ENCODE measurements at regions of chrX and their contacts with region 1.

Region 1: DNA sequence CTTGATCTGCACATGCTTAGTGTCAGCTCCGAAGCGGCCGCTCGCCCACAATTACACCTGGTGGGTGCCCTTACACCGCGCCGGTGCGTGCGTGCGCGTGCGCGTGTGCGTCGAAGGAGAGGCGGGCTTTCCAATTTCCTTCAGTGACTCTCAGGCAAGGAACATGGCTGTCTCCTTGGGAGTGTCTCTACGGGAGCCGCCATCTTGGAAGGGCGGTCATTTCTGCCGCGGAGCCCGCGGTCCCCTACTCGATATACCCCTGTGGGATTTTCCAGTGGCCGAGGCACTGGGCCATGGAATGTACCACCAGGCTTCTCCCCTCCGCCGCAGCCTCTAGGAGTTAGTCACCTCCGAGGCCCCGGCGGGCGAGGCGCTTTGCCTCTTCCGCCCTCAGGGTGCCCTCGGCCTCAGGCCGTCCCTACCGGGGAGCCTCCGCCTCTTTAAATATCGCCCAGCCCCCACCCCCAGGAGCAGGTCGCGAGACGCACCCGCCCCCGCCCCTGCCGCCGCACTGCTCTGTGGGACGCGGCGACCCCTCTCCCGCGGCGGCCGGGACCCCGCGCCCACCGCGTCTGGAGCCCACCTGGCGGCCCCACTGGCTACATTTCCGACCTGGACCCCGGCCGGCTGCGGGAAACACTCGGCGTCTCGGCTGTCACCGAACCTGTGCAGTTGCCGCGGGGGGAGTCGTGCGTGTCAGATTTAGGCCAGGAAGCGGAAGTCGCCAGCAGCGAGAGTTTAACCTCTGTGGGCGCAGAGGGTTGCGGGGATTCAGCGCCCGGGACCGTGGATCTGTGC is at the start of gene ZNF41:
- DNase-seq: peak; percentile 63
- ATAC-seq: peak; percentile 78
- H3K4me3 Mint-ChIP-seq: peak within 1 kb of the TSS; percentile 90
- H3K27ac Mint-ChIP-seq: peak within 1 kb of the TSS; percentile 92
- H3K4me1 Mint-ChIP-seq: peaks cover 42% of the 10 kb centered on the region
- H3K27me3 Mint-ChIP-seq: no peaks in the 10 kb centered on the region
- CTCF ChIP-seq: no peak
- total RNA-seq, gene ZNF41: 15.4 and 19.2 TPM in 2 replicates

Region 2: DNA sequence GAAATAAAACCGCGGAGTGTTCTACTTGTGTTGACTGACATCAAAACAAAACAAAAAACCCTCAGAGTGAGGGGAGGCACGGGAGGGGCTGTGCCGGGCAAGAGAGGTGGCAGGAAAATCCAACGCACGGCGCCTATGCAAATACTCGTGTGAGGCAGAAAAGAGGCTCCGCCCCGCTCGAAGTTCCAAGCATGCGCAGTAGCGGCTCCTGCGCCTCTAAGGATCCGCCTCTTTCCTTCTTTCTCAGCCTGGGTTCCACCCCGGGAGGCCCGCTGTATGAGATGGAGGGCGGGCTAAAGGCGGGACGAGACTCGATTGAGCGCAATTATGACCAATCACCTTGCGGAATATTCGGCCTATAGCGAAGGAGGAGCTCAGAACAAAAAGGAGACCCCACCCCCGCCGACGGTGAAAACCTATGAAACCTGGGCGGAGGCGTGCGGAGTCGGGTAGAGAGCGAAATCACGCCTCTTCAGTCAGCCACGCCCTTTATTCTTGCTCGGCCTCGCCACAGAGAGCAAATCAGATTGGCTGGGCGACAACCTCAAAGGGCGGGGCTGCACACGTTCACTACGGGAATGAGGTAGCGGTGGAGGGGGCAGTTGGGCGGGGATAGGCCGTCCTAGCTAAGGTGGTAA is 264.9 kb before region 1 on chrX:
- CTCF ChIA-PET with region 1: no interaction called
- POLR2A ChIA-PET with region 1: interaction called, 4 read pairs
- intact Hi-C with region 1: loop called (anchors 2 kb)
- DNase-seq: peak; percentile 84
- ATAC-seq: peak; percentile 80
- H3K4me3 Mint-ChIP-seq: peak overlapping the region; percentile 92
- H3K27ac Mint-ChIP-seq: peak overlapping the region; percentile 99
- H3K4me1 Mint-ChIP-seq: peaks cover 40% of the 10 kb centered on the region
- H3K27me3 Mint-ChIP-seq: no peaks in the 10 kb centered on the region
- CTCF ChIP-seq: no peak

Region 3: GRCh38 chrX:47233337-47234113 is 249.2 kb before region 1 on chrX:
- CTCF ChIA-PET with region 1: no interaction called
- POLR2A ChIA-PET with region 1: interaction called, 5 read pairs
- intact Hi-C with region 1: loop called (anchors 2 kb)
- DNase-seq: peak; percentile 74
- ATAC-seq: peak; percentile 90
- H3K4me3 Mint-ChIP-seq: peak overlapping the region; percentile 92
- H3K27ac Mint-ChIP-seq: peak overlapping the region; percentile 98
- H3K4me1 Mint-ChIP-seq: peaks cover 15% of the 10 kb centered on the region
- H3K27me3 Mint-ChIP-seq: no peaks in the 10 kb centered on the region
- CTCF ChIP-seq: no peak

Region 4: GRCh38 chrX:47413179-47413594 is 69.5 kb before region 1 on chrX:
- CTCF ChIA-PET with region 1: no interaction called
- POLR2A ChIA-PET with region 1: no interaction called
- intact Hi-C with region 1: no loop called
- DNase-seq: no peak
- ATAC-seq: no peak
- H3K4me3 Mint-ChIP-seq: no peak overlapping the region
- H3K27ac Mint-ChIP-seq: no peak overlapping the region
- H3K4me1 Mint-ChIP-seq: no peaks in the 10 kb centered on the region
- H3K27me3 Mint-ChIP-seq: no peaks in the 10 kb centered on the region
- CTCF ChIP-seq: no peak

Region 5: DNA sequence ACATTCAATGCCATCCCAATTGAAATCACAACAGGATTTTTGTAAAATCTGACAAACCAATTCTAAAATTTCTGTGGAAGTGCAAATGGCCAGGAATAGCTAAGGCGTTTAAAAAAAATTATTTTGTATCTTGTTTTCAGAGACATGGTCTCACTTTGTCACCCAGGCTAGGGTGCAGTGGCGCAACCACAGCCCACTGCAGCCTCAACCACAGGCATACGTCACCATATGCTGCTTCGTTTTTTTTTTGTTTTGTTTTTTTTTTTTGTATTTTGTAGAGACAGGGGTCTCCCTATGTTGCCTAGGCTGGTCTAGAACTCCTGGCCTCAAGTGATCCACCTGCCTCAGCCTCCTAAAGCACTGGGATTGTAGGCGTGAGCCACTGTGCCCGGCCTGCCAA is 24.2 kb before region 1 on chrX:
- CTCF ChIA-PET with region 1: no interaction called
- POLR2A ChIA-PET with region 1: no interaction called
- intact Hi-C with region 1: no loop called
- DNase-seq: no peak
- ATAC-seq: no peak
- H3K4me3 Mint-ChIP-seq: no peak overlapping the region
- H3K27ac Mint-ChIP-seq: no peak overlapping the region
- H3K4me1 Mint-ChIP-seq: no peaks in the 10 kb centered on the region
- H3K27me3 Mint-ChIP-seq: no peaks in the 10 kb centered on the region
- CTCF ChIP-seq: no peak

Region 6: GRCh38 chrX:47958761-47959342 is 476.1 kb after region 1 on chrX:
- CTCF ChIA-PET with region 1: no interaction called
- POLR2A ChIA-PET with region 1: no interaction called
- intact Hi-C with region 1: no loop called
- DNase-seq: no peak
- ATAC-seq: peak; percentile 52
- H3K4me3 Mint-ChIP-seq: no peak overlapping the region
- H3K27ac Mint-ChIP-seq: no peak overlapping the region
- H3K4me1 Mint-ChIP-seq: peaks cover 18% of the 10 kb centered on the region
- H3K27me3 Mint-ChIP-seq: no peaks in the 10 kb centered on the region
- CTCF ChIP-seq: no peak

Measured in activated B cell treated with CpG ODN at 0.5 μM for 24 hours (primary cell).